ENCODE measurements at regions of chr4 and their contacts with region 1.

Region 1: GRCh38 chr4:39638354-39639240 is at the start of gene SMIM14:
- DNase-seq: peak; percentile 98 to 99 (median 99)
- ATAC-seq: peak; percentile 97 to 99 (median 98)
- H3K4me3 ChIP-seq: peak within 1 kb of the TSS; percentile 70 to 97 (median 78)
- H3K27ac ChIP-seq: peak within 1 kb of the TSS; percentile 87 to 99 (median 96)
- H3K4me1 ChIP-seq: peaks cover 0 to 43% (median 18%) of the 10 kb centered on the region in 12 donors
- H3K27me3 ChIP-seq: no peaks in the 10 kb centered on the region
- CTCF ChIP-seq: peak in 6 of 12 donors; percentile 14 to 33 (median 16)
- POLR2A ChIP-seq: peak; percentile 82 to 98
- total RNA-seq, gene SMIM14: 7.1 to 24.8 (median 11.9) TPM

Region 2: DNA sequence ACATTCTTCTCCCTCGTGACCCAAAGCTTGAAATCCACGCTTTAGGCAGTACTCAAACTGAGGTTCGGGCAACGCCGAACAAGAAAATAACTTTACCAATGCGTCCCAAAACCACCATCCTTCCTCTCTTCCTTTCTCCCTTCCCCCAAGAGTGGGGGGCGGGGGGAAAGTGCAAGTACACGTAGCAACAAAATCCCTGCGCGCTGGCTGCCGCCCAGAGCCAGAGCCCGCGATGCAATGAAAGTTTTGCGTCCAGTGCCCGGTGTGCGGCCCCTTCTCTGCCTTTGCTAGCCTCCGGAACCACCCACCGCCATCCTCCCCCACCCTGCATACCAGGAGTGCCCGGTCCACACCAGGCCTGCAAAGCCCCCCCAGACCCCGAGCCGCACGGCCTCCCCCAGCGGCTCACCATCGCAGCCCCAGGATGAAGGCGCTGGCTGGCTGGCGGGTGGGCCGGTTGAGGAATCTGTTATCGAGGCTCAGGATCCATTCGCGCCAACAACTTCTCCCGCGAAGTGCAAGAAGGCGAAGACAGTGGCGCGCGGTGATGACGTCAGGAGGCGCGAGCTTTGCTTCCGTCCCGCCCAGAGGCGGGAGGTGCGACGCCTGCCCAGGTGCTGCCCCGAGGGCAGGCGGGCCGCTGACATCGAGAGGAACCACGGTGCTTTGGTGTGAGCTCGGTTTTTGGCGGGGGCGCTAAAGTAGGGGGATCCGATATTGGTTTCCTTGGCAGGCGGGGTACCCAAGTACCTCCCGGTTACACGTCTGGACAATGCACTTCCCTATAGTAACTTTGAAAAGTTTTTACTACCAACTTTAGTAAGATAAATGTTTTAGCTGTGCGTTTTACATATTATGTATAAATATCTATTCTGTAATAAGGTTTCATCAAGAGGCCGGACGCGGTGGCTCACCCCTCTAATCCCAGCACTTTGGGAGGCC is 272.5 kb before region 1 on chr4 and contains the start of gene RFC1:
- intact Hi-C with region 1: loop called in 1 of 10 experiments (anchors 10 kb)
- DNase-seq: peak; percentile 90 to 95 (median 93)
- ATAC-seq: peak; percentile 65 to 97 (median 96)
- H3K4me3 ChIP-seq: peak within 1 kb of the TSS; percentile 68 to 98 (median 86)
- H3K27ac ChIP-seq: peak within 1 kb of the TSS in 11 of 12 donors; percentile 32 to 89 (median 68)
- H3K4me1 ChIP-seq: peaks cover 0 to 28% (median 15%) of the 10 kb centered on the region in 12 donors
- H3K27me3 ChIP-seq: no peaks in the 10 kb centered on the region
- CTCF ChIP-seq: no peak
- POLR2A ChIP-seq: no peak
- total RNA-seq, gene RFC1: 21.0 to 31.2 (median 24.3) TPM

Region 3: DNA sequence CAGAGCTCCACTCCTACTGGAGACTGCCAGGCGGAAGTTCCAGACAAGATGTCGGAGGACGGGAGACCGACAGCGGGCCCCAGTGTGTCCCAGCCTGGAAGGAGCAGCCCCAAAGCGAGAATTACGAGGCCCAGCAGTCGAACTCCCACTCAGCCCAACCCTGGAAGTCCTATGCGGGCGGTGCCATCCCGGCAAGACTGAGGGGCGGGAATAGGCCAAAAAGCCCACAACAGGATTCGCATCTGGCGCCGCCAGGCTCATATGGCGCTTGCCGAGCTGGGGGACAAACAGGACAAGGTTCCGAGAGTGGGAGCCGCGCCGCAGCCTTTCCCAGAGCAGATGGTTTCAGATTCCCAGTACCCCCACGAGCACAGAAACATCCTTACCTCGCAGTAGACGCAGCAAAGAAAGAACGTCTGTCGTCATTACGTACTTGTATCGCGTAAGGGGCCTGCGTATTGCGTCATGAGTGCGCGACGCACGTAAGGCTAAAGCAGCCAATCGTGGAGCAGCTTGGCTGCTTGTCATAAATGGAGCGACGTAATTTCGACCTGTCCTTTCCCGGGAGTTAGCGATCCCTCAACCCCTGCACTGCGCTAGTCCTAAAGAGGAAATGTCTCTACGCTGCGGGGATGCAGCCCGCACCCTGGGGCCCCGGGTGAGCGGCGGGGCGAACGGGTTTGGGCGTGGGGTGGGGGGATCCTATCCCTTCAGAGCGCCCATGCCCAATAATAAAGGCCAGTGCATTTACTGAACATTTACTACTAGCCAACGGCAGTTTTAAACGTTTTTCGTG is 179.9 kb before region 1 on chr4 and contains the starts of genes LIAS and RPL9:
- intact Hi-C with region 1: loop called in 6 of 10 experiments (anchors 5 to 10 kb)
- DNase-seq: peak; percentile 94 to 98 (median 96)
- ATAC-seq: peak; percentile 95 to 97 (median 97)
- H3K4me3 ChIP-seq: peak within 1 kb of the TSS; percentile 67 to 93 (median 85)
- H3K27ac ChIP-seq: peak within 1 kb of the TSS; percentile 86 to 98 (median 92)
- H3K4me1 ChIP-seq: peaks cover 10 to 37% (median 27%) of the 10 kb centered on the region in 12 donors
- H3K27me3 ChIP-seq: no peaks in the 10 kb centered on the region
- CTCF ChIP-seq: no peak
- POLR2A ChIP-seq: peak; percentile 87 to 95
- total RNA-seq, gene LIAS: 15.9 to 34.4 (median 20.2) TPM
- total RNA-seq, gene RPL9: 576 to 1,701 (median 925) TPM

Region 4: DNA sequence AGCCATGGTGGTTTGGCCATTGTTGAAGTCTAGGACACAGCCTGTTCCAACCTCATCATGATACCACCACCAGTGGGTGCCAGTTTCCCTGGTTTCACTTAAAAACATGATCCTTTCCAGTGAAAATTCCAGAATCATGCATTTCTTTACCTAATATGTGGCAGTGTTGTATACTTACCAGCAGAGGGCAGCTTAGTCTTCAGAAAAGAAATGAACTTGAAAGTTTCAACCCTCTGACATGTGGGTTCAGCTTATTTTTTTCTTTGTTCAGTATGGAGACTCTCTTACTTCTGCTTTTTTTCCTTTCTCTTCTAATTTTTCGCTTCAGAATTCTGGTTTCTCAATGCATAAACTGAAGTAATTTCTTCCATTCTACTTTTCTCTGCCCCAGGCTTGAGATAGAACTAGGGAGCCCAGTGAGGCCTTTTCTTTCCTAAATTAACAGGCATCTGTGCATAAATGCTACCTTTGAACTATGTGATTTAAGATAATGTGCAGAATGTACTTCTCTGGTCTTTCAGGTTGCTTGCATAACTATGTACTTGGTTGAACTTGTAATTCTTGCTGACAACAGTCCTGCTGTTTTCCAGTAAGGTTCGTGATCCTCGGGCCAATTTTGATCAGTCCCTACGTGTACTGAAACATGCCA is 169.0 kb before region 1 on chr4:
- intact Hi-C with region 1: loop called in 5 of 10 experiments (anchors 5 to 10 kb)
- DNase-seq: no peak
- ATAC-seq: peak; percentile 47 to 84 (median 76)
- H3K4me3 ChIP-seq: peak overlapping the region in 1 of 12 donors; percentile 28
- H3K27ac ChIP-seq: peak overlapping the region in 6 of 12 donors; percentile 11 to 82 (median 22)
- H3K4me1 ChIP-seq: peaks cover 0 to 10% (median 0%) of the 10 kb centered on the region in 12 donors
- H3K27me3 ChIP-seq: no peaks in the 10 kb centered on the region
- CTCF ChIP-seq: peak; percentile 63 to 89 (median 80)
- POLR2A ChIP-seq: no peak

Region 5: GRCh38 chr4:39527273-39528060 is 111.1 kb before region 1 on chr4 and contains the start of gene UGDH:
- intact Hi-C with region 1: loop called (anchors 1 to 5 kb)
- DNase-seq: peak; percentile 96 to 99 (median 98)
- ATAC-seq: peak; percentile 98 to 99 (median 99)
- H3K4me3 ChIP-seq: peak within 1 kb of the TSS; percentile 54 to 97 (median 76)
- H3K27ac ChIP-seq: peak within 1 kb of the TSS; percentile 87 to 97 (median 95)
- H3K4me1 ChIP-seq: peaks cover 0 to 30% (median 17%) of the 10 kb centered on the region in 12 donors
- H3K27me3 ChIP-seq: no peaks in the 10 kb centered on the region
- CTCF ChIP-seq: peak in 4 of 12 donors; percentile 4 to 41 (median 28)
- POLR2A ChIP-seq: peak; percentile 62 to 94
- total RNA-seq, gene UGDH: 7.3 to 28.6 (median 16.5) TPM

Region 6: GRCh38 chr4:40056716-40057585 is 418.4 kb after region 1 on chr4 and contains the start of gene N4BP2:
- intact Hi-C with region 1: loop called in 2 of 10 experiments (anchors 5 kb)
- DNase-seq: peak; percentile 86 to 93 (median 87)
- ATAC-seq: peak; percentile 60 to 86 (median 84)
- H3K4me3 ChIP-seq: peak within 1 kb of the TSS; percentile 73 to 100 (median 92)
- H3K27ac ChIP-seq: peak within 1 kb of the TSS; percentile 98 to 100 (median 100)
- H3K4me1 ChIP-seq: peaks cover 0 to 27% (median 12%) of the 10 kb centered on the region in 12 donors
- H3K27me3 ChIP-seq: no peaks in the 10 kb centered on the region
- CTCF ChIP-seq: peak; percentile 40 to 95 (median 76)
- POLR2A ChIP-seq: peak; percentile 56 to 91
- total RNA-seq, gene N4BP2: 3.5 to 6.8 (median 5.0) TPM

Measured in heart left ventricle (tissue), 16 donors.